H1 (cell line): ENCODE measurements at regions of chr9 and their contacts with region 1.

Region 1: DNA sequence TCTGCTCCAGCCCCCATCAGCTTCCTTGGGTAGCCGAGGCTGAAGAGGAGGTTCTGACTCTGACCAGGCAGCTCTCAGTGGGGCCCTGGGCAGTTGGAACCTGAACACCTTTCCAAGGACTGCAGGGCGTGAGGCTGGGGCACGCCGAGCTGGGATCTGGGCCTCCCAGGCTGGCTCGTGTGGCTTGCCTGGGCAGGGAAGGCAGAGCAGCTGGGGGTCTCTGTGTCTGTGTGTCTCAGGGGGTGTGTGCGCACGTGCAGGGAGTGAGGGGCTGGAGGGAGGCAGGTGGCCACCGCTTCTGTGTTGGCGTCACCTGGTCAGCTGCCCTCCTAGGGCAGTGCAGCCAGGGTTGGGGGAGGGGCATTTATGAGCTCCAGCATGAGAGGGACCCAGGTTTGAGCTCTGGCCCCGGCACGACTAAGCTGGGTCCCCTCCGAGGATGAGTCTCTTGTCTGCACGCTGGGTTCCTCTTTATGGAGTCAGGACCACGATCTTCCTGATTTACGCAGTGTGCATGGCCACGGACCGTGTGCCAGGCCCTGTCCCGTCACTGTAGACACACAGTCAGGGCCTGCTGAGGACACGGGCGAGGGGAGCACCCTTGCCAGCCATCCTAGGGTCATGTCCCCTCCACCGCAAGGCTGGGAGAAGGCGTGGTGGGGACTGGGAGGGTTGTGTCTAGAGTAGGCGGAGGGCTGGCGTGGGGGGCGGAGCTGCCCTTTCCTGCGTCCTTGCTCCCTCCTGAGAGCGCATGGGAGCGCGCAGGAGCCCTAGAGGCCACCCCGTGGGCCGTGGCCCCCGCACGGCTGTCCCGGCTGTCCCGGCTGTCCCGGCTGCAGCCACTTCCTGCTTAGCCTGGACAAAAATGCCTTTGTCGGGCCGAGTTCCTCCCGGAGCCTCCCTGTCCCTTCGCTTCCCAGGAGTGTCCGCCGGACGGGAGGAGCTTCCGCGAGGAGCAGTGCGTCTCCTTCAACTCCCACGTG is 4.6 kb downstream of the ADAMTSL2 start:
- DNase-seq: no peak
- H3K4me3 ChIP-seq: no peak overlapping the region
- H3K27ac ChIP-seq: no peak overlapping the region
- H3K4me1 ChIP-seq: peaks cover 0 to 35% (median 16%) of the 10 kb centered on the region in 4 experiments; a peak in 6 of 7 replicates
- H3K27me3 ChIP-seq: peaks cover 0 to 16% (median 11%) of the 10 kb centered on the region in 4 experiments; a peak in 3 of 7 replicates
- CTCF ChIP-seq: no peak
- EP300 ChIP-seq: no peak
- POLR2A ChIP-seq: no peak
- RAD21 ChIP-seq: no peak

Region 2: GRCh38 chr9:133519693-133520092 is 19.4 kb before region 1 on chr9:
- CTCF ChIA-PET with region 1: interaction called, 10 read pairs
- POLR2A ChIA-PET with region 1: no interaction called
- DNase-seq: no peak
- H3K4me3 ChIP-seq: no peak overlapping the region
- H3K27ac ChIP-seq: no peak overlapping the region
- H3K4me1 ChIP-seq: peaks cover 0 to 3% (median 0%) of the 10 kb centered on the region in 4 experiments; a peak in 1 of 7 replicates
- H3K27me3 ChIP-seq: no peaks in the 10 kb centered on the region
- CTCF ChIP-seq: no peak
- EP300 ChIP-seq: no peak
- POLR2A ChIP-seq: no peak
- RAD21 ChIP-seq: no peak

Region 3: GRCh38 chr9:133527444-133527920 is 11.7 kb before region 1 on chr9:
- CTCF ChIA-PET with region 1: interaction called, 19 read pairs
- POLR2A ChIA-PET with region 1: interaction called, 11 read pairs
- DNase-seq: no peak
- H3K4me3 ChIP-seq: no peak overlapping the region; a peak in 1 of 8 replicates
- H3K27ac ChIP-seq: no peak overlapping the region
- H3K4me1 ChIP-seq: peaks cover 4 to 33% (median 30%) of the 10 kb centered on the region in 4 experiments
- H3K27me3 ChIP-seq: peaks cover 0 to 5% (median 2%) of the 10 kb centered on the region in 4 experiments; a peak in 4 of 7 replicates
- CTCF ChIP-seq: no peak
- EP300 ChIP-seq: no peak
- POLR2A ChIP-seq: no peak
- RAD21 ChIP-seq: no peak

Region 4: DNA sequence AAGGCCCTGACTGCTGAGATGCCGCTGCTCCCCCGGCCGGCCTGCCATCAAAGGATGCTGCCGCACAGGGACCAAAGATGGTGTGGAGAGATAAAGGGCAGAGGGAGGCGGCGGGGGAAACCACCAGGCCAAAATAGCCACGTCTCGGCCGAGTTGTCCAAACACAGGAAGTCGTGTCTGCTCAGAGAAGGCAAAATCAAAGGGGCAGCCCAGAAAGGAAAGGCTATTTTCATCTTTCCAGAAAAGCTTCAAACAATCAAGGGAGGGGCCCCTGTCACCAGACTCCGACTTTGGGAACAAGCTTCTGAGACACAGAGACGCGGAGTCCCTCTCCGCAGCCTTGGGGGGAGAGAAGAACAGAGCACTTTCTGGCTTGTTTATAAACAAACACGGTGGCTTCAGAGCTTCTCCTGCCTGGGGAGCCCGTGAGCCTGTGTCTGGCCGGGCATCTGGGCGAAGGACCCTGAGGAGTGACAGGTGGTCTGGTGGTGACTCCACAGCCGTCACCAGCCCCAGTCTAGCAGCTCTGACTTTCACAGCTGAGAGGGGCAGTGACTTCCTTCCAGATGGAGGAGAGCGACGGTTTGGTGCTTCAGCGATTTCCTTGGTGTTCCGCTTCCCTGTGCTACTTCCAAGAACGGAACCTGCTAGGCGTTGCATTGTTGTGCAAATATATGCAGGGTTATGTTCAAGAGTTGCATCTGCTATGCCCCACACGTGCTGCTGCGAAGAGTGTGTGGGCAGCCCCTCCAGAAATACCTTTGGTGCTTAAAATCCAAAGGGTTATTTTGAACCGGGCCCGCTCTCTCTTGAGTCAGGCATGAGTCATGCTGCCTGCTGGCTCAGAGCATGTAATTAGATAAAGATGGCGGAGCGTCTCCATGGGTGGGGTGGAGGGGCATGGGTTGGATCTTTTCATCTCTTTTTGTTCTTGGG is 19.3 kb after region 1 on chr9:
- CTCF ChIA-PET with region 1: interaction called, 26 read pairs
- POLR2A ChIA-PET with region 1: interaction called, 3 read pairs
- DNase-seq: no peak
- H3K4me3 ChIP-seq: no peak overlapping the region
- H3K27ac ChIP-seq: no peak overlapping the region
- H3K4me1 ChIP-seq: peaks cover 9 to 17% (median 11%) of the 10 kb centered on the region in 4 experiments; a peak in 6 of 7 replicates
- H3K27me3 ChIP-seq: no peaks in the 10 kb centered on the region; a peak in 1 of 7 replicates
- CTCF ChIP-seq: no peak
- EP300 ChIP-seq: no peak
- POLR2A ChIP-seq: no peak
- RAD21 ChIP-seq: no peak